ENCODE measurements at regions of chr5 and their contacts with region 1.

Region 1: DNA sequence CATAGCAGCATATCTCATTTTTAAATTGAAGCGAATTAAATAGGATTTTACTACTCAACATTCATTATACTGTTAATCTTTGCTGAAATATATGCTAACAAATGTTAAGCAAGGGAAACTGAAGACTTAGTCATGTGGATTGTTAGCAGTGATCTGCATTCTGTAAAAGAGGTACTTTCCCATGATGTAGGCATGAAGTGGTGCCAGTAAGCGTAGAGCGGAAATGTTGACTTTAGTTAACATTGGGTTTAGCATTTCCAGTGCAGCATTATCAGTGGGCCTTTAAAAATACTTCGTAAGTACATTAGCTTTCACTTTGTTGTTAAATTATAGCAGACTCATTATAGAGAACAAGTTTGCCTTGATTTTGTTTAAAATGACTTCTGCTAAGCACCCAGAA is 130.3 kb downstream of the CDC42SE2 start:
- DNase-seq: peak; percentile 72
- H3K4me3 Mint-ChIP-seq: peak overlapping the region; percentile 67
- H3K27ac Mint-ChIP-seq: peak overlapping the region; percentile 96
- H3K4me1 Mint-ChIP-seq: peaks cover 93% of the 10 kb centered on the region
- H3K27me3 Mint-ChIP-seq: no peaks in the 10 kb centered on the region

Region 2: DNA sequence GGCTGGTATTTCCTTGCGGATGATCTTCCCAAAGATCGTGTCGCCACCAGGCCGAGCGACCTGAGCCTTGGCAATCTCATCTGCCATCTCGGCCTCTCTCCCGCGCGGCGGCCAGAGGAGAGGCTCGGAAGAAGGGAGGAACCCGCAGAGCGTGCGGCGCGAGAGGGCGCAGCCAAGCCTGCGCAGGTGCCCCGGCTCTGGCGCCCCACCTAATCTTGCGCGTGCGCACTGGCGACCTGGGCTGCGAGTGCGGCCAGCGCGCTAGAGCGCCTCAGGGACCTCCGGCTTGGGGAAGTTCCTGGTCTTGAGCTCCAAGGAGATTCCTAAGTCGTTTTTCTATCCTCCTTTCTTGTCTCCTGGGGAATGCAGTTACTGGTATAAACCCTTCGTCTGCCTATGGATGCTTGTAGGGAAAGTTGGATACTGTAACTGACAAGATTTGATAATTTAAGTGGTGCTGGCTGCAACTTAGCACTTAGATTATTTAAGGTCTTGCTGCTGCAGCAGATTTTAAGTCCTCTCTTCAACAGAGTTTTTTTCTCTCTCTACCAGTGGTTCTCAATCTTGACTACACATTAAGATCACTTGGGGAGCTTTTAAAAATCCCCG is 228.9 kb before region 1 on chr5 and contains the start of gene HINT1:
- CTCF ChIA-PET with region 1: interaction called, 3 read pairs
- intact Hi-C with region 1: loop called (anchors 1 kb)
- DNase-seq: peak; percentile 93
- H3K4me3 Mint-ChIP-seq: peak within 1 kb of the TSS; percentile 96
- H3K27ac Mint-ChIP-seq: peak within 1 kb of the TSS; percentile 99
- H3K4me1 Mint-ChIP-seq: peaks cover 44% of the 10 kb centered on the region
- H3K27me3 Mint-ChIP-seq: no peaks in the 10 kb centered on the region
- total RNA-seq, gene HINT1: 372 to 379 TPM

Region 3: DNA sequence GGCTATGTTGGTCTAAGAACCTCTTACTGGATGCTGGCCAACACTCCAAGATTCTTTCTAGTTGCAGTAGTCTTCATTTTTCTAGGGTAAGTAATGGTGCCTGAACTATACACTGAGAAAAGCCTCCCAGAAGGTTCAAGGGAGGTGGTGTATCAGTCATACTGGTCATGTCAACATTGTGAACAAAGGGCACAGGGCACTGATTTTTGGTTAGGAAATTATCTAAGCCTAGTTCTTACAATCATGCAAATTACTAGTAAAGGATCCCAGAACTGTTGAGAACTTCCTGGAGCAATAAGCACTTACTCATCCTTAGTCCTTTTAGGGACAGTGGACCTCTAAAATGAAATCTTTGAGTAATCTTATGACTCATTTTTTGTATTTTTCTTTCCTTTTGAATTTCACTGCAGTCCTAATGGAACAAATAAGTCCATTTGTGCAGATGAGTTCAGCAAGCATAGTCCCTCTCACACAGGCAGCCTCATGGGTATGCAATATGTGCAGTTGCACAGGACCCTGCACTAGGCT is 151.3 kb before region 1 on chr5:
- CTCF ChIA-PET with region 1: no interaction called
- intact Hi-C with region 1: no loop called
- DNase-seq: peak; percentile 38
- H3K4me3 Mint-ChIP-seq: no peak overlapping the region
- H3K27ac Mint-ChIP-seq: no peak overlapping the region
- H3K4me1 Mint-ChIP-seq: peaks cover 16% of the 10 kb centered on the region
- H3K27me3 Mint-ChIP-seq: no peaks in the 10 kb centered on the region

Region 4: DNA sequence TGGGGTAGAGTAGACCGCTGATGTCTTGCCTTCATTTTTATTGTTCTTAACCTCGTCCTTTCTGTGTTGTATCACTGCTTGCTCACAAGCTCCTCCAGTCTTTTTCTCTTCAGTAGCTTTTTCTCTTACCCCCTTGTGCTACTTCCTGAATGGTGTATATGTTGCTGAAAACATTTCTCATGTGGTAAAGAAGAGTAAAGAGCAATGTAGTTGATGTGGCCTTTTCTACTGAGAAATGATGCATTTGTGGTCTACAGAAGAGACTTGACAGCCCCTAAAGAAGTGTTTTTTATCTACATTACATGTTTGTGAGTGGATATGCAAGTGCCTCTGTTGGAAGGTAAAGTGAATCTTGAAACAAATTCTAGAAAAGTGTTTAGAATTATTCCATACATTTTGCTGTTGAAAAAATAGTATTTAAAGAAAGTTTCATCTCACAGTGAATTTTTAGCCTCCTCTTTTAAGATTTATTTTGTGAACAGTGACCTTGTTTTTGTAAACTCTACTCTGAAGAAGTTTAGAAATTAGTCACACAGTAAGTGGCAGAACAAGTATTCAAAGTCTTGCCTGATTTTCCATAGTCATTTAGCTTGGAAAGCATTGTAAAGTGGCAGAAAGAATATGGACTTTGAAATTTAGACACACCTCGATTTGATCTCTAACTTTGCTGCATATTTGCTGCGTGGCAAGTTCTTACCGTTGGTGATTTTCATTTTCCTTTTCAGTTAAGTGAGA is 112.8 kb before region 1 on chr5:
- CTCF ChIA-PET with region 1: interaction called, 3 read pairs
- intact Hi-C with region 1: loop called (anchors 1 kb)
- DNase-seq: no peak
- H3K4me3 Mint-ChIP-seq: peak overlapping the region; percentile 66
- H3K27ac Mint-ChIP-seq: peak overlapping the region; percentile 93
- H3K4me1 Mint-ChIP-seq: peaks cover 92% of the 10 kb centered on the region
- H3K27me3 Mint-ChIP-seq: no peaks in the 10 kb centered on the region

Region 5: DNA sequence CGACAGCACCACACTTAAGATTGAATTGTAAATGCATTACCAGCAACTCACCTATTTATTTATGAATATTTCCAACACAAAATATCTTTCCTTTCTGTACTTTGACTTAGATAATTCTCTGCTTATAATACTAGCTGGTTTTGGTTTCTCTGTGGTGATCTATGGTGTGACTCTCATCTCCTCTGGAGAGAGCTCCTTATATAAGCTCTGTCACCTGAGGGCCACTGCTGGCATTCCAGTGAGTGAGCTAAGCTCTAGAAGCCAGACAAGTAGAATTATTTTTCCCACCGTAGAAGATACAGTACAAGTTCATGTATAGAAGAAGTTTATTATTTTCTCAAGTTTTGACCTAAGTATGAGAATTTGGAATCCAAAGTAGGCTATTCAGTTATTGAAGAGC is 18.8 kb before region 1 on chr5:
- CTCF ChIA-PET with region 1: interaction called, 10 read pairs
- intact Hi-C with region 1: loop called (anchors 1 kb)
- DNase-seq: no peak
- H3K4me3 Mint-ChIP-seq: no peak overlapping the region
- H3K27ac Mint-ChIP-seq: peak overlapping the region; percentile 85
- H3K4me1 Mint-ChIP-seq: peaks cover 89% of the 10 kb centered on the region
- H3K27me3 Mint-ChIP-seq: no peaks in the 10 kb centered on the region

Region 6: GRCh38 chr5:131541762-131542161 is 147.6 kb after region 1 on chr5:
- CTCF ChIA-PET with region 1: no interaction called
- intact Hi-C with region 1: loop called (anchors 1 kb)
- DNase-seq: no peak
- H3K4me3 Mint-ChIP-seq: peak overlapping the region; percentile 20
- H3K27ac Mint-ChIP-seq: peak overlapping the region; percentile 78
- H3K4me1 Mint-ChIP-seq: peaks cover 81% of the 10 kb centered on the region
- H3K27me3 Mint-ChIP-seq: no peaks in the 10 kb centered on the region